ENCODE measurements at regions of chr12 and their contacts with region 1.

Region 1: GRCh38 chr12:72995616-72996015 is 723.4 kb downstream of the TRHDE start:
- DNase-seq: no peak
- ATAC-seq: no peak
- H3K4me3 ChIP-seq: no peak overlapping the region
- H3K27ac ChIP-seq: no peak overlapping the region
- H3K4me1 ChIP-seq: no peaks in the 10 kb centered on the region
- H3K27me3 ChIP-seq: no peaks in the 10 kb centered on the region
- CTCF ChIP-seq: no peak

Region 2: DNA sequence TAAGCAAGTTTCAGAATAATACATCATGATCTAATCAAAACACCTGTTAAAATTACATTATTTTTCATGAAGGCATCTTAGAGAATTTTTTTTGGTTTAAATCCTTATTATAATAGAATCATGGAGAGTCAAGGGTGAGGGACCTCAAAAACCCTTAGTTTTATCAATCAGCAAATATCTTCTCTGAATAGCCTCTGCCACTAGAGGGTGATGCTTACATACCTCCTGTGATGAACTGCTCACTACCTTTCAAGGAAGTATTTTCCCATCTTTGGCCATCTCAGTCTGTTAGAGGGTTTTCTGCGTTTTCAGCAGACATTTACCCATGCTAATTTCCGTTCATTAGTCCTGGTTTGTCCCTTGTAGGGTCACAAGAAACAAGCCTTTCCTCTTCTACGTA is 523.3 kb before region 1 on chr12:
- CTCF ChIA-PET with region 1: no interaction called
- POLR2A ChIA-PET with region 1: no interaction called
- in situ Hi-C with region 1: no loop called
- intact Hi-C with region 1: no loop called
- DNase-seq: no peak
- ATAC-seq: no peak
- H3K4me3 ChIP-seq: no peak overlapping the region
- H3K27ac ChIP-seq: no peak overlapping the region
- H3K4me1 ChIP-seq: no peaks in the 10 kb centered on the region
- H3K27me3 ChIP-seq: no peaks in the 10 kb centered on the region
- CTCF ChIP-seq: peak; percentile 13; the same call in 1 of the 2 replicates

Region 3: GRCh38 chr12:72957450-72957849 is 38.2 kb before region 1 on chr12:
- CTCF ChIA-PET with region 1: no interaction called
- POLR2A ChIA-PET with region 1: no interaction called
- in situ Hi-C with region 1: no loop called
- intact Hi-C with region 1: no loop called
- DNase-seq: no peak
- ATAC-seq: no peak
- H3K4me3 ChIP-seq: no peak overlapping the region
- H3K27ac ChIP-seq: no peak overlapping the region
- H3K4me1 ChIP-seq: no peaks in the 10 kb centered on the region
- H3K27me3 ChIP-seq: no peaks in the 10 kb centered on the region
- CTCF ChIP-seq: no peak

Region 4: GRCh38 chr12:72974954-72975555 is 20.6 kb before region 1 on chr12:
- CTCF ChIA-PET with region 1: no interaction called
- POLR2A ChIA-PET with region 1: no interaction called
- in situ Hi-C with region 1: no loop called
- intact Hi-C with region 1: loop called (anchors 2 kb)
- DNase-seq: no peak
- ATAC-seq: no peak
- H3K4me3 ChIP-seq: no peak overlapping the region
- H3K27ac ChIP-seq: no peak overlapping the region
- H3K4me1 ChIP-seq: no peaks in the 10 kb centered on the region
- H3K27me3 ChIP-seq: no peaks in the 10 kb centered on the region
- CTCF ChIP-seq: no peak

Region 5: GRCh38 chr12:73072214-73072613 is 76.6 kb after region 1 on chr12:
- CTCF ChIA-PET with region 1: no interaction called
- POLR2A ChIA-PET with region 1: no interaction called
- in situ Hi-C with region 1: no loop called
- intact Hi-C with region 1: no loop called
- DNase-seq: no peak
- ATAC-seq: no peak
- H3K4me3 ChIP-seq: no peak overlapping the region
- H3K27ac ChIP-seq: no peak overlapping the region
- H3K4me1 ChIP-seq: no peaks in the 10 kb centered on the region
- H3K27me3 ChIP-seq: no peaks in the 10 kb centered on the region
- CTCF ChIP-seq: no peak

Region 6: DNA sequence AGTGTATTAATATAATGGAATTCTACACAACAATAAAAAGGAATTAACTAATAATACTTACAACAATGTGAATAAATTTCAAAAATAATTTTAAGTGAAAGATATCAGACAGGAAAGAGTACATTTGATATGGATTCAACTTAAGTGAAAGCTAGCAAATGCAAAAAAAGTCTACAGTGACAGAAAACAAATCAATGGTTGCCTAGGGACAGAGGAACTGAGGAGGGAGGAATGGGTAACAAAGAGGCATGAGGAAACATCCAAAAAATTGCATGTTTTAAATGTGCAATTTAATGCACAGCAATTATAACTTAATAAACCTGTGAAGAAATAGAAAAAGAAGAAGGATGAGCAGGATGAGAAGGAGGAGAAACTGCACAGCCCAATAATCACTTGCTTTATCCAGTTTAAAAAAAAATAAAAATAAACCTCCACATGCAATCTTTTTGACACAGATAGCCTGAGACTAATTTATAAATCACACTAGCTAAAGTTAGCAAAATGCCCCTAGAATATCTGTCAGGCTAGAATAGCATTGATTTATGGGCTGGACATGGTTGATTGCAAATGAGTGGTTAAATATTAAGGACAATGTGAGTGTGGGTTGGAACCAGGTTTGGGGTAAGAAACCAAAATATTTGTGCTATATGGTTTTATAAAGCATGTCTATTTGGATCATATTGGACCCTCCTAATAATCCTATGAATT is 365.7 kb after region 1 on chr12:
- CTCF ChIA-PET with region 1: no interaction called
- POLR2A ChIA-PET with region 1: no interaction called
- in situ Hi-C with region 1: no loop called
- intact Hi-C with region 1: no loop called
- DNase-seq: no peak
- ATAC-seq: no peak
- H3K4me3 ChIP-seq: no peak overlapping the region
- H3K27ac ChIP-seq: no peak overlapping the region
- H3K4me1 ChIP-seq: no peaks in the 10 kb centered on the region
- H3K27me3 ChIP-seq: no peaks in the 10 kb centered on the region
- CTCF ChIP-seq: no peak

Measured in Panc1 (cell line).